Left ventricle myocardium superior (tissue), 1 donor: ENCODE measurements at regions of chr2 and their contacts with region 1.

Region 1: DNA sequence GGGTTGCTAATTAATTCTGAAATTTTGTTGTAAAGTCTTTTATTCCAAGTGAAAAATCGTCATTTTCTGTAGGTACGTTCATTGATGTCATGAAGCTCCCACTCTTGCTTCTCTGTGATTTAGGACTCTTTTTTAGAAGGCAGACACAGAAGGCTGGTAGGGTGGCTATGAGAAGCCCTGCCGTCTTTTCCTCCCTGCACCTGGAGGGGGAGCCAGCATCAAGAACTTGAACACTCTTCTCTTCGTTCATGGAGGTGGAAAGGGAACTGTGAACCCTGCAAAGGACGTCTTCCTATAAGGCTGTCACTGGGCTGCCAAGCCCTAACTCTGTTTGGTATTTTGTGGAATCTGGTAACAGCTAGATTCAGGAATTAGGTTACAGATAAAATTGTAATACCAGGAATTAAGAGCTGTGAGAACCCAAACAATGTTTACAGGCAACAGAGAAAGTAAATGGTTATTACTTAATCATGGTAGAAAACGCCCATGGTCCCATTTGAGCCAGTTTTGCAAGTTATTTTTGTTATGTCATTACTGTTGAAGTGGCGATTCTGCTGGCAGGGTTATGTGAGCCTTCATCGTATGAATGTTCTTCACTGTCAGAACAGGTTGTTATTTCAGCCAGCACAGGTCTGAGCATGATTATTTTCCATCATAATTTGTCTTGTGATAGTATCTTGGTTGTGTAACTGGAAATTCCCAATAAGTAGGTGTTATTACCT is 112.2 kb downstream of the OSBPL6 start:
- DNase-seq: peak; percentile 31
- ATAC-seq: peak; percentile 73

Region 2: GRCh38 chr2:177921726-177922125 is 384.8 kb before region 1 on chr2:
- intact Hi-C with region 1: no loop called
- DNase-seq: no peak
- ATAC-seq: no peak

Region 3: DNA sequence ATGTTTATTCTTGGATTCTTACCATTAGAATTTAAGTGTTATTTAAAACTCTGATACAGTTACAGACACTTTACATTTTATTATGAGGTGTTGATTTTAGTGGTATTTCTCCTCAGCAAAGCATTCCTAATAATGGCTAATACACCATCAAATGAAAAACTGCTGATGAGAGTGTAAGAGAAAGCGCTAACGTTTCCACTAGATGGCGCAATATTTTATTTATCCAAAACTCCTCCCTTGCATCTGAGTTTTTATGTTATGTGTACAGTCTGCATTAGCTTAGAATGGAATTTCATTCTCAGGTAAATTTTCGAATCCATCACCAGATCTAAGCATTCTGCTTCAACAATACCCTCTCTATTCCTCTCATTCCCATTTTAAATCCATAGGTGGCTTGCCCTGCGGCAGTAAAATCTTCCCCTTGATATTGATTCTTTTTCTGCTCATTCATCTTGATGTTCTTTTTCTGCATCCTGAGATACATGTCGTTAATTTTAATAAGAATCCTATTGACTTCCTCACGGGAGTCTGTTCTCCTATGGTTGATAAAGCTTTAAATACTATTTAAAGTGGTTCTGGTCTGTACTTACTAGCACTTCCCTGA is 90.6 kb after region 1 on chr2:
- intact Hi-C with region 1: loop called (anchors 10 kb)
- DNase-seq: no peak
- ATAC-seq: peak; percentile 70